ENCODE measurements at regions of chr4 and their contacts with region 1.

Region 1: DNA sequence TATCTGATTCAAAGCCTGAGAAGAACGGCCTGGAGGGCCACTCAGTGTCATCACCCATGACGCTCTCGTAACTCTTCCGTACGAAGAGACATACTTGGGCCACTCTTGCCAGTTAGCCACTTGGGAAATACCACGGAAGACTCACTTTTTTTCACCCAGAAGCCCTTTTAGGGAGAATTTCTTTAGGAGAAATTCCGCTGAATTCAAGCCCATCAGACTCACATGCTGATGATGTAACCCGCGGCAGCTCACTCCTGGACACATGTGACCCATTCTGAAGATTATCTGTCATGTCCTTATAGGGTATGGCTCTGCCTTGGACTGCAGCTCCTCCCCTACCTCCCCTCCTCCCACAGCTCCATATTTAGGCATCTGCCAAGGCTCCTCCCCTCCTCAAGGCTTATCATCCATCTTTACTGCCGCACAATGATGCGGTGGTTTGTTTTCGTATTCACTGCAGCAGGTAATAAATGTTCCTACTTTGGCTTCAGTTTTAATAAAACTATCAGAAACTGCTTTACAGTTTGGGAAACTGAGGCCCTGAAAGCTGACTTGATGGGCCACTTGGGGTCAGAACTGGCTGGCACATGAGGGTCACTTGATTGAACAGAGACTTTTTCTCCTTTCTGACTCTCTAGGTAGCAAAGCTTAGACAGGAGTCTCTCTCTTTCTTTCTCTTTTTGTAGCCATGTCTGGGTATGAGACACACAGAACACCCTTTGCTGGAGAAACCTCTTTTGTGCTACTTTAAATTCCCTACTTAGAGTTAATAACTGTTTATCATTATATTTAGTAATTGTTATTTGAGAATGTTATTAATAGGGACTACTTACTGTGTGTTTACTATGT is 42.1 kb downstream of the RHOH start:
- DNase-seq: peak in 8 of 9 donors; percentile 54 to 90 (median 75)
- ATAC-seq: peak; percentile 94
- H3K4me3 ChIP-seq: peak overlapping the region; percentile 49
- H3K4me3 Mint-ChIP-seq: peak overlapping the region; percentile 64 to 87 (median 79)
- H3K27ac ChIP-seq: peak overlapping the region; percentile 79
- H3K27ac Mint-ChIP-seq: peak overlapping the region; percentile 89 to 98 (median 94)
- H3K4me1 ChIP-seq: peaks cover 81 to 90% of the 10 kb centered on the region in 2 donors
- H3K4me1 Mint-ChIP-seq: peaks cover 54 to 97% (median 94%) of the 10 kb centered on the region in 7 donors
- H3K27me3 ChIP-seq: no peaks in the 10 kb centered on the region
- H3K27me3 Mint-ChIP-seq: no peaks in the 10 kb centered on the region

Region 2: DNA sequence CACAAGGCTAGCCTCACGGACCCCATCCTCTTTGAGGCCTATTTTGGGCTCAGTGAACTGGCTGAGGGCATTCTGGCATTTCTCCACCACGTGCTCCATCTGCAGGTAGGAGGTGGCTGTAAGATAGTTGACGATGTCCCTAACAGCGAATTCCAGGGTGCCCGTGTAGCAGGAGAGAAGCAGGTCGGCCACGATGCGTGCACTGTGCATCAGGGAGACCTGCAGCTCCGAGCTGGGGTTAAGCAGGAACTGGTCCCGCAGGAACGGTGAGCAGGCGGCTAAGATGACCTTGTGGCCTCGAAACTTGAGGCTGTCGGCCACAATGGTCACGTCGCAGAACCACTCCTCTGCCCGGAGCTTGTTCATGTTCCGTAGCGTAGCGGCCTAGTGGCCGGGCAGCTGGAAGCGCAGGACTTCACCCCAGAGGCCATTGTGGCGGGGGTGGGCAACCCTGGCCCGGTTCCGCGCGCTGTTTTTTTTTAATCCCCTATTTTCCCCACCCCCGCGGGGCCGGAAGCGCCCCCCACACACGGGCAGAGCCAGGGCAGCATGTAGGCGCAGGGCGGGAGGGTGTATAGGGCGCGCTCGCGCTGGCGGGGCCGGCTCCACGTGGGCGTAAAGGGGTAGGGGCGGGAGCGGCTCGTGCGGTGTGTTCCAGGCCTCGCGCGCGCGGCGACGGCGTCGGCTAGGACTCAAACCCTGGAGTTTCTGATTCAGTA is 467.8 kb before region 1 on chr4:
- CTCF ChIA-PET with region 1: no interaction called
- POLR2A ChIA-PET with region 1: no interaction called
- intact Hi-C with region 1: no loop called
- DNase-seq: no peak
- ATAC-seq: no peak
- H3K4me3 ChIP-seq: no peak overlapping the region
- H3K4me3 Mint-ChIP-seq: no peak overlapping the region
- H3K27ac ChIP-seq: no peak overlapping the region
- H3K27ac Mint-ChIP-seq: no peak overlapping the region
- H3K4me1 ChIP-seq: no peaks in the 10 kb centered on the region
- H3K4me1 Mint-ChIP-seq: peaks cover 0 to 3% (median 0%) of the 10 kb centered on the region in 7 donors
- H3K27me3 ChIP-seq: no peaks in the 10 kb centered on the region
- H3K27me3 Mint-ChIP-seq: no peaks in the 10 kb centered on the region

Region 3: DNA sequence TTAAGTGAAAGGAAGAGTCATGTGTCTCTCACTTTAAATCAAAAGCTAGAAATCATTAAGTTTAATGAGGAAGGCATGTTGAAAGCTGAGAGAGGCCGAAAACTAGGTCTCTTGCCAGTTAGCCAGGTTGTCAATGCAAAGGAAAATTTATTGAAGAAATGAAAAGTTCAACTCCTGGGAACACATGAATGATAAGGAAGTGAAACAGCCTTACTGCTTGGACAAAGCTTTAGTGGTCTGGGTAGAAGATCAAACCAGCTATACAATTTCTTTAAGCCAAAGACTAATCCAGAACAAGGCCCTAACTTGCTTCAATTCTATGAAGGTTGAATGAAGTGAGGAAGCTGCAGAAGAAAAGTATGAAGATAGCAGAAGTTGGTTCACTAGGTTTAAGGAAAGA is 17.2 kb before region 1 on chr4:
- CTCF ChIA-PET with region 1: interaction called, 3 read pairs
- POLR2A ChIA-PET with region 1: interaction called, 13 read pairs
- intact Hi-C with region 1: loop called in 1 of 2 experiments (anchors 2 kb)
- DNase-seq: no peak
- ATAC-seq: no peak
- H3K4me3 ChIP-seq: no peak overlapping the region
- H3K4me3 Mint-ChIP-seq: peak overlapping the region; percentile 45 to 99 (median 62)
- H3K27ac ChIP-seq: peak overlapping the region; percentile 51
- H3K27ac Mint-ChIP-seq: peak overlapping the region; percentile 65 to 99 (median 91)
- H3K4me1 ChIP-seq: peaks cover 91 to 94% of the 10 kb centered on the region in 2 donors
- H3K4me1 Mint-ChIP-seq: peaks cover 60 to 98% (median 90%) of the 10 kb centered on the region in 7 donors
- H3K27me3 ChIP-seq: no peaks in the 10 kb centered on the region
- H3K27me3 Mint-ChIP-seq: no peaks in the 10 kb centered on the region

Region 4: DNA sequence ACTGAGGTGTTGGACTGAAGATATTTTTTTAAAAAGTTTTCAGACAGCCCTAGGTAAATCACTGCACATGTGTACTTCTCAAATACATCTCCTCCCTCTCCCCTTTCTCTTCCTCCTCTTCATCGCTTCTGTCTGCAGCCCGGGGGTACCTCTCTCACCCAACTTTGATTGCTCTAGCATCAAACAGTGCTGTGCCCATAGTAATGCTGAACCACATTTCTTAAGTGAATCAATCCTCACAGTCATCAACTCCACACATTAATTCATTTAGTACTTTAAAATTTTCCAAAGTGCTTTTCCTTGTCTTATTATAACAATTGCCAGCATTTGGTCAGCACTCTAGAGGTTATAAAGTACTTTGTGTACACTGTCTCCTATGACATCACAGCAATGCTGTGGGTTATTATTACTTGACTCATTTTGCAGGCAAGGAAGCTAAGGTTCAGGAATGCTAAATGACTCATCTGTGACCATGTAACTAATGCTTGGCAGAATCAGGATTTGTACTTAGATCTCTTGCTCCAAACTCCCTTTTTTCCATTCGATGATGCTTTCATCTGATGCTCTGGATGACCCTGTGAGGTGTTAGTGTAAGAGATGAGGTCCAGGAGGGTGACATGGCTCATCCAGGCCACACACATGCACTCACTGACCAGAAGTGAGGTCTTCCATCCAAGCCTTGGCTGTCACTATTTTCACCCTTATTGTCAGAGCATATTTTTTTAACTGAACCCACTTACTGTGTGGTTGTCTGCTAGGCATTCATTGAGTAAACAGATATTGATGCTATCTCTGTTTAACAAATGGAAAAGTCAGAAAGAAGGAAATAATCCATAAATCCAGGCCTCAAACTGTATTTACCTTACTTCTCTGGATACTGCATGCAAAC is 16.7 kb after region 1 on chr4:
- CTCF ChIA-PET with region 1: interaction called, 5 read pairs
- POLR2A ChIA-PET with region 1: interaction called, 6 read pairs
- intact Hi-C with region 1: loop called in 1 of 2 experiments (anchors 2 kb)
- DNase-seq: no peak
- ATAC-seq: no peak
- H3K4me3 ChIP-seq: no peak overlapping the region
- H3K4me3 Mint-ChIP-seq: peak overlapping the region; percentile 47 to 93 (median 64)
- H3K27ac ChIP-seq: peak overlapping the region; percentile 58
- H3K27ac Mint-ChIP-seq: peak overlapping the region; percentile 79 to 99 (median 92)
- H3K4me1 ChIP-seq: peaks cover 22 to 68% of the 10 kb centered on the region in 2 donors
- H3K4me1 Mint-ChIP-seq: peaks cover 46 to 83% (median 77%) of the 10 kb centered on the region in 7 donors
- H3K27me3 ChIP-seq: no peaks in the 10 kb centered on the region
- H3K27me3 Mint-ChIP-seq: no peaks in the 10 kb centered on the region